ENCODE measurements at regions of chr7 and their contacts with region 1.

Region 1: DNA sequence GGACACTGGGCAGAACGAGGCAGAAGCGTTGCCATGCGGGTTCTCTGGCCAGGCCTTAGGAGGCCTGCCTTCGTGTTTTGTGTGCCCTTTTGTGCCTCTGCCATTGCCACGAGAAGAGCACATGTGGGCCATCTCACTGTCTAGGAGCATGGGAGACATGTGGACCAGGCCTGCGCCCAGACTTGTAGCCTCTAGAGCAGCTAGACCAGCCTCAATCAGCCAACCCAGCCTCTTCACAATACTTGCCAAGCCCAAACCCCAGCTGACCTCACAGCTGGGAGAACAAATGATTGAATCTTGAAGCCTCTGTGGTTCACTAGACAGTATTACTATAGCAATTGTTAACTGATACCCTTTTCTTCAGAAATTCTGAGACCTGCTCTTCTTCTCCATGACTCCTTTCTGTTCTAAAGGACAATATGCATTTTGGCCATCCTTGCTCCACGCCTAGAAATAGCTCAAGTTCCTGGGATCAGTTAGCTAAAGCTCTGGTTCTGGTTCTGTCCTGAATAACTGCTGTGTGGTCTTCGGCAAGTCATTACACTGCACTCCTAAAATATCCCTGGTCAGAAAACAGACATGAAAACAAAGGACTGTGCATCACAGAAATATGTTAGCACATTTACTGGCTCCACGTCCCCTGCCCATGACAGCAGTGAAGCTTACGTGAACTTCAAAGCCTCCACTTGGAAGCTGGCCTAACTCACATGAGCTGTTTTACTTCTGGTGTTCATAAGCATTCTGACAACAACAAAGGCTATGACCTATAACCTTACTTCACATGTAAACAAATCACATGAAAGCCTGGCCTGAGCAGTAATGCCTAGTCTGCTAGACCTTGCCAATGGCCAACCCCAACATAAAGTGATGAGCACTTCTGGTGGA is 72.3 kb upstream of the MKRN1 start:
- DNase-seq: no peak
- H3K4me3 ChIP-seq: no peak overlapping the region
- H3K27ac ChIP-seq: no peak overlapping the region
- H3K4me1 ChIP-seq: no peaks in the 10 kb centered on the region
- H3K27me3 ChIP-seq: no peaks in the 10 kb centered on the region
- CTCF ChIP-seq: no peak

Region 2: GRCh38 chr7:140596519-140597427 is 45.2 kb after region 1 on chr7:
- CTCF ChIA-PET with region 1: no interaction called
- dilution Hi-C with region 1: loop called (anchors 5 kb)
- in situ Hi-C with region 1: no loop called
- intact Hi-C with region 1: no loop called
- DNase-seq: no peak
- H3K4me3 ChIP-seq: no peak overlapping the region
- H3K27ac ChIP-seq: no peak overlapping the region
- H3K4me1 ChIP-seq: no peaks in the 10 kb centered on the region
- H3K27me3 ChIP-seq: no peaks in the 10 kb centered on the region
- CTCF ChIP-seq: no peak

Measured in mammary epithelial cell (primary cell).